BJ (cell line): ENCODE measurements at regions of chr1 and their contacts with region 1.

Region 1: GRCh38 chr1:19882111-19883071 is at the start of gene OTUD3:
- DNase-seq: peak; percentile 81
- H3K4me3 ChIP-seq: peak within 1 kb of the TSS; percentile 84
- H3K27me3 ChIP-seq: no peaks in the 10 kb centered on the region
- CTCF ChIP-seq: peak; percentile 93
- polyA plus RNA-seq, gene OTUD3: 2.5 and 4.1 TPM in 2 replicates

Region 2: GRCh38 chr1:19715334-19716203 is 166.8 kb before region 1 on chr1:
- CTCF ChIA-PET with region 1: interaction called, 14 read pairs
- POLR2A ChIA-PET with region 1: no interaction called
- DNase-seq: peak; percentile 78
- H3K4me3 ChIP-seq: no peak overlapping the region
- H3K27me3 ChIP-seq: no peaks in the 10 kb centered on the region
- CTCF ChIP-seq: peak; percentile 92

Region 3: DNA sequence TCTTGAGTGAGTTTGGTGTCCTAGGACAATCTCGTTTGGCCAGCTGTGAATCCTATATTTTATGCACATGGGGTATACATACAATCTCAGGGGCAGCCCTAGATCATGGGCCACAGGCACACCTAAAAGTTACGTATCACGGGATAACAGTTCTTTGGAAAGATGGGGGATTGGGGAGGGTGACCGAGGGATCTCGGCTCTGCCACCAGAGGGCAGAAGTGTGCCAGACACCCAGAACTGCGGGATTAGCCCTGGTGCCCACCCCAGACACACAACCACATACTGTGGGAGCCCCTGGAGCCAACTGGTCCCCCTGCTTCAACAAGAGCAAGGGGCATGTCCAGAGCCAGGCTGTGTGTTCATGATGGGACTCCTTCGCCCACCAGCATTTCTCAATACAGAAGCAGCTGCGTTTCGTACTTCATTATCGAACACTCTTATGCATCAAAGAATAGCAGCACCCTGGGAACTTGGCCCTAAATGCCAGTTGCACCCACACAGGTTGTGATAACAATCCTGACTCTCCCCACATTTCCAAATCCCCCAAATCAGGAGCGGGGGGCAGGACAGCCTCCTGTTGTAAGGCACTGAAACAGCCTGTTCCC is 120.1 kb before region 1 on chr1:
- CTCF ChIA-PET with region 1: interaction called, 23 read pairs
- POLR2A ChIA-PET with region 1: no interaction called
- DNase-seq: no peak
- H3K4me3 ChIP-seq: no peak overlapping the region
- H3K27me3 ChIP-seq: no peaks in the 10 kb centered on the region
- CTCF ChIP-seq: peak; percentile 83

Region 4: DNA sequence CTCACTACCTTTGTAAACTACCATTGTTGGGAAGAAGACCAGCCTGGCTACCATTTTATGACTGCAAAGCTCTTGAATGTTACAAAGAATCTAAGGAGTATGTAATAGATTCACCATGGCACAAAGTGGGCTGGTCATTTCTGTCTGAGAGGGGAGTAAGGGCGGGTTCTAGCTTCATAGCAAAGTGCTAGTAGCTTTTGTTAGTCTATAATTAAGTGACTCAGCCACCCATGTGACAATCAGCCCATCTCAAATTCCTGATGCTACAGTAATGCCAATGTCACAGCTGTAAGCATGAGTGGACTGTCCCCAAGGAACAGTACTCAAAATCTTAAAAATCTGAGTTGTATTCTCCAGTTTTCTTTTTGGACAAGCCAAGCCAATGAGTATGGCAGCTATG is 15.6 kb before region 1 on chr1:
- CTCF ChIA-PET with region 1: interaction called, 34 read pairs
- POLR2A ChIA-PET with region 1: no interaction called
- DNase-seq: no peak
- H3K4me3 ChIP-seq: no peak overlapping the region
- H3K27me3 ChIP-seq: no peaks in the 10 kb centered on the region
- CTCF ChIP-seq: no peak

Region 5: DNA sequence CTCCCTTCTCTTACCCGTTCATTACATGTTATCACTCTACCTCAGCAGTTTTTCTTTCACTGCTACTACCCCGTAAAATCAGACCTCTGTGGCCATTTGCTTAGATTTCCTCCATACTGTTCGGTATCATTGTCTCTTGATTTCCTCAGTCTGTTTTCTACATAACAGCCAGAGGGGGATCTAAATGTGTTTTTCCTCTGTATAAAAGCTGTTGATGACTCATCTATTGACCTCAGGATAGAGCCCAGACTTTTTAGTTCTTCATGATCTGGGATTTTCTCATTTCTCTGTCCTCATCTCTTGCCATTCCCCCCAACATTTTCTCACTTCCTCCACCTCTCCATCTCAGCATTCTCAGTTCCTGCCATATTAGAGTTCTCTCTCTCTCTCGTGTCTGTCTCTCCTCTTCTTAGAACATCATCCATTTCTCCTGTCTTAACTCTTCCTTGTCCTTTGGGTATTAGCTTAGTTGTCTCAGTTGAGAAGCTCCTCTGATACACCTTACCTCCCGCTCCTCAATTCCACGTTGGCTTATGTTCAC is 10.3 kb after region 1 on chr1:
- CTCF ChIA-PET with region 1: interaction called, 14 read pairs
- POLR2A ChIA-PET with region 1: no interaction called
- DNase-seq: no peak
- H3K4me3 ChIP-seq: no peak overlapping the region
- H3K27me3 ChIP-seq: no peaks in the 10 kb centered on the region
- CTCF ChIP-seq: no peak

Region 6: GRCh38 chr1:20290624-20291597 is 408.5 kb after region 1 on chr1 and contains the start of gene VWA5B1:
- CTCF ChIA-PET with region 1: no interaction called
- POLR2A ChIA-PET with region 1: no interaction called
- DNase-seq: no peak
- H3K4me3 ChIP-seq: no peak within 1 kb of the TSS
- H3K27me3 ChIP-seq: peaks cover 17% of the 10 kb centered on the region
- CTCF ChIP-seq: no peak
- polyA plus RNA-seq, gene VWA5B1: not detected in 2 replicates